ENCODE measurements at regions of chr19 and their contacts with region 1.

Region 1: GRCh38 chr19:35352448-35353304 is 5.0 kb downstream of the FFAR1 start:
- DNase-seq: peak; percentile 52 to 71 (median 68)
- ATAC-seq: peak; percentile 58 to 72
- H3K4me3 ChIP-seq: no peak overlapping the region
- H3K27ac ChIP-seq: no peak overlapping the region
- H3K4me1 ChIP-seq: no peaks in the 10 kb centered on the region
- H3K27me3 ChIP-seq: no peaks in the 10 kb centered on the region

Region 2: DNA sequence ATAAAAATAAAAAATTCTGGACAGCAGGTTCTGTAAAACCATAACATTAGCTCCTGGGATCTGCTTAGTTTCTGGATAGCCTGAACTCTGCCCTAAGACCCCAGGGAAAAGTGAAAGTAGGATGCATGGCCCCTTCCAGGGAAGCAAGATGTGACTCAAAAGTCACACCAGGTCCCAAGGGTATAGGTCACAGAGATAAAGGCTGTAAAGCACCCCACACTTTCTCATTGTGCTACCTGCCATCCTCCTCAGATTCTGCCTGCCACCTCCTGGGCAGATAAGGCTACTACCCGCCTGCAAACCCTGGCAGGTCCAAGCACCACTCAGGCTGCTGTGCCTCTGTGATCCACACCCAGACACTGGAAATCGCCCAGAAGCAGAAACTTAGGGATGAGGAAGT is 116.0 kb after region 1 on chr19:
- intact Hi-C with region 1: loop called in 3 of 4 experiments (anchors 2 to 10 kb)
- DNase-seq: peak; percentile 30 to 65 (median 60)
- ATAC-seq: peak; percentile 90
- H3K4me3 ChIP-seq: no peak overlapping the region
- H3K27ac ChIP-seq: no peak overlapping the region
- H3K4me1 ChIP-seq: no peaks in the 10 kb centered on the region
- H3K27me3 ChIP-seq: no peaks in the 10 kb centered on the region

Region 3: DNA sequence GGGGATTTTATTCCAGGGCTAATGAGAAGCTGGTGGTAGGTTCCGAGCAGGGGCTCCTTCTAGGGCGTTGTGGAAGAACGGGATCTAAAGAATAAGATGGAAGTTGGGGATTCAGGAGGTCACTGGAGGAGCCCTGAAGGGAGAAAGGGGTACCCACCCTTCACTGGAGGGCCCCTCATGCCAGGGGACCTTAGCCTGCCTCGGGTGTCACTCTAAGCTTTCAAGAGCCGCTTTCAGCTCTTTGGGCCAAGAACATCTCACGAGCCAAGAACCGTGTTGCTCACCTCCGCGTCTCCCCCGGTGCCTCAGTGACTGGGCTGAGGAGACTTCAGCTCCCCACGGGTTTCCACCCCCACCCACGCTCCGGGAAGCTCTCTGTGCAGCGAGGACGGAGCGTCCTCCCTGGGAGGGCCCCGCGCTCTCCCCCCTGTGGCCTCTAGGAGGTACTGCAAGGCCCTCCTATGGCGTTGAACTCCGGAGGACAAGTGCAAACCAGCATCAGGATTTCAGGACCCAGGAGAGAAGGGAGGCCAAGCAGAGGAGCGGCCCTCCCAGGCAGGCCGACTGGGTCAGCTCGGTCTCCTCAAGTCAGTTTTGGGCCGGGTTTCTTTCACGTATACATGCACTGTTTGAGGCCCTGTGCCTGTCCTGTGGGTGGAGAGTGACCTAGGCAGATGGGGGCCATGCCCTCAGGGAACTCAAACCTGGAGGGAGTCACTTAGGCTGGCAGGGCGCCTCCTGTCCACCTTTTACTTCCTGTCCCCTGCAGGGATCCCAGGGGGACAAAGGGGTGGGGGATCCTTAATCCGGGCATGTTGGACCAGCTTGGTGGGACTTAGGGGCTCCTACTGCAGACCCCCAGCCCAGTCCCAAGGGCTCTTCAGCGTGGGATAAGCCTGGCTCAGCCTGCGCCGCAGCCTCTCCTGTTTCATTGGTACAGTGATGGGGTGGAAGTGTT is 142.7 kb after region 1 on chr19:
- intact Hi-C with region 1: loop called (anchors 2 to 10 kb)
- DNase-seq: peak; percentile 61 to 82 (median 82)
- ATAC-seq: peak; percentile 85 to 90
- H3K4me3 ChIP-seq: no peak overlapping the region
- H3K27ac ChIP-seq: no peak overlapping the region
- H3K4me1 ChIP-seq: no peaks in the 10 kb centered on the region
- H3K27me3 ChIP-seq: no peaks in the 10 kb centered on the region